GM13977 (cell line): ENCODE measurements at regions of chr9 and their contacts with region 1.

Region 1: DNA sequence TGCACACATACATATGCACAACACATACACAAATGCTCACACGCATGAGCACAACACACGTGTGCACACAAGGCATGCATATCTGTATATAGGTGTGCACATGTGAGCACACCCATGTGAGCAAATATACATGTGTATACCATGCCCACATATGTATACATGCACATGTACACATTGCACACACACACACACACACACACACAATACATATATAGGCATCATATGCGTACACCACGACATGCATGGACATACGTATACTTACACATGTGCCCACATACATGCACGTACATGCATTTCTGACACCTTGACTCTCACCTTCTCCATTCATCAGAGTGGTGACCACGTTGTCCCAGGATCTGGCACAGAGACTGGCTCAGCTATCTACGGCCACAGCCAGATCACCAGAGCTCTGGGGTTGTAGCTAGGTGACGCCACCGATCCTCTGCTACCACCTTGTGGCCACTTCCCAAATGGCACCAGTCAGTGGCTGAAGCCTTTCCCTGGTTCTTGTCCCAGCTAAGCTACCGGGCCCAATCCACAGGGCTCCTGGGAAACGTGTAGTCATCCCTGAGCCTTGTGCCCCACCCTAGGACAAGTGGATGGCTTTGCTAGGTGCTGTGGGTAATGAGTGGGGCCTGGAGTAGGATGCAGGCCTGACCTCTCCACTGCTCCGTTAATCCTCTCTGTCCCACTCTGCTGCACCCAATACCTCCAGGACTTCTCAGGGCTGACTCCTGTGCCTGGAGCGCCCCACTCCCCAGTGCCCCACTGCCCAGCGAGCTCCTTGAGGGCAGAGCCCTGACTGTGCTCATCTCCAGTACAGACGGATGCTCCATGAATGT is 194.4 kb downstream of the RGS3 start:
- DNase-seq: peak; percentile 86
- CTCF ChIP-seq: peak; percentile 95

Region 2: GRCh38 chr9:113309204-113309813 is 348.6 kb before region 1 on chr9:
- in situ Hi-C with region 1: loop called (anchors 25 kb)
- DNase-seq: peak; percentile 60
- CTCF ChIP-seq: peak; percentile 73

Region 3: GRCh38 chr9:113454914-113455761 is 202.8 kb before region 1 on chr9:
- in situ Hi-C with region 1: loop called (anchors 25 kb)
- DNase-seq: no peak
- CTCF ChIP-seq: no peak

Region 4: GRCh38 chr9:114061830-114062474 is 404.0 kb after region 1 on chr9:
- in situ Hi-C with region 1: no loop called
- DNase-seq: no peak
- CTCF ChIP-seq: no peak